Caco-2 (cell line): ENCODE measurements at regions of chr2 and their contacts with region 1.

Region 1: DNA sequence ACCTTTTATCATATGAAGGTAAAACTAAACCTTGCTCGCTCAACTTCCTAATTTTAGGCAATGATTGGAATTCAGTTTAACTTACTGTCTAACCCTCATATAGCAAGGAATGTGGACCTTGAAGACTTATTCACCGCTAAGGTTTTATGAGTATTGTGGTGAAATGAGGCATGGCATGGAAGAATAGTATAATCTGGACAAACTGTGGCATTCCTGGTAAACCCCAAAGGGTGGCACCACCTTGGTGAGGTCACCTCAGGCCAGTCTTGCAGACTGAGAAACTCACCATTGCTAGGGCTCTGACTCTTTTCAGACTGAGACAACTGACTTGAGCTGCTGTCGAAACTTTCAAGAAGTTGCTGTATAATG is 51.1 kb upstream of the EHBP1 start:
- DNase-seq: peak in 1 of 2 experiments; percentile 37
- H3K4me3 ChIP-seq: no peak overlapping the region
- H3K4me3 Mint-ChIP-seq: peak overlapping the region; percentile 47
- H3K27ac Mint-ChIP-seq: peak overlapping the region; percentile 81
- H3K4me1 ChIP-seq: peaks cover 24% of the 10 kb centered on the region
- H3K4me1 Mint-ChIP-seq: peaks cover 27% of the 10 kb centered on the region
- H3K27me3 ChIP-seq: no peaks in the 10 kb centered on the region
- H3K27me3 Mint-ChIP-seq: no peaks in the 10 kb centered on the region
- CTCF ChIP-seq: no peak

Region 2: GRCh38 chr2:62611854-62612253 is 42.6 kb before region 1 on chr2:
- CTCF ChIA-PET with region 1: no interaction called
- POLR2A ChIA-PET with region 1: no interaction called
- intact Hi-C with region 1: no loop called
- DNase-seq: no peak
- H3K4me3 ChIP-seq: no peak overlapping the region
- H3K4me3 Mint-ChIP-seq: no peak overlapping the region
- H3K27ac Mint-ChIP-seq: no peak overlapping the region
- H3K4me1 ChIP-seq: no peaks in the 10 kb centered on the region
- H3K4me1 Mint-ChIP-seq: no peaks in the 10 kb centered on the region
- H3K27me3 ChIP-seq: no peaks in the 10 kb centered on the region
- H3K27me3 Mint-ChIP-seq: no peaks in the 10 kb centered on the region
- CTCF ChIP-seq: no peak

Region 3: GRCh38 chr2:62624855-62625254 is 29.6 kb before region 1 on chr2:
- CTCF ChIA-PET with region 1: no interaction called
- POLR2A ChIA-PET with region 1: no interaction called
- intact Hi-C with region 1: no loop called
- DNase-seq: no peak
- H3K4me3 ChIP-seq: no peak overlapping the region
- H3K4me3 Mint-ChIP-seq: no peak overlapping the region
- H3K27ac Mint-ChIP-seq: no peak overlapping the region
- H3K4me1 ChIP-seq: peaks cover 18% of the 10 kb centered on the region
- H3K4me1 Mint-ChIP-seq: peaks cover 6% of the 10 kb centered on the region
- H3K27me3 ChIP-seq: no peaks in the 10 kb centered on the region
- H3K27me3 Mint-ChIP-seq: no peaks in the 10 kb centered on the region
- CTCF ChIP-seq: no peak

Region 4: GRCh38 chr2:62641410-62641843 is 13.0 kb before region 1 on chr2:
- CTCF ChIA-PET with region 1: no interaction called
- POLR2A ChIA-PET with region 1: interaction called, 4 read pairs
- intact Hi-C with region 1: loop called (anchors 1 kb)
- DNase-seq: no peak
- H3K4me3 ChIP-seq: no peak overlapping the region
- H3K4me3 Mint-ChIP-seq: peak overlapping the region; percentile 15
- H3K27ac Mint-ChIP-seq: peak overlapping the region; percentile 23
- H3K4me1 ChIP-seq: peaks cover 31% of the 10 kb centered on the region
- H3K4me1 Mint-ChIP-seq: peaks cover 22% of the 10 kb centered on the region
- H3K27me3 ChIP-seq: no peaks in the 10 kb centered on the region
- H3K27me3 Mint-ChIP-seq: no peaks in the 10 kb centered on the region
- CTCF ChIP-seq: no peak

Region 5: GRCh38 chr2:62672601-62673000 is 18.2 kb after region 1 on chr2:
- CTCF ChIA-PET with region 1: interaction called, 5 read pairs
- POLR2A ChIA-PET with region 1: interaction called, 3 read pairs
- intact Hi-C with region 1: loop called (anchors 1 kb)
- DNase-seq: peak; percentile 90 to 97
- H3K4me3 ChIP-seq: no peak overlapping the region
- H3K4me3 Mint-ChIP-seq: peak overlapping the region; percentile 48
- H3K27ac Mint-ChIP-seq: no peak overlapping the region
- H3K4me1 ChIP-seq: peaks cover 55% of the 10 kb centered on the region
- H3K4me1 Mint-ChIP-seq: peaks cover 23% of the 10 kb centered on the region
- H3K27me3 ChIP-seq: no peaks in the 10 kb centered on the region
- H3K27me3 Mint-ChIP-seq: no peaks in the 10 kb centered on the region
- CTCF ChIP-seq: peak in 1 of 2 experiments; percentile 15